WTC11 (cell line): ENCODE measurements at regions of chr6 and their contacts with region 1.

Region 1: GRCh38 chr6:32843979-32844838 is at the start of gene PSMB8:
- DNase-seq: peak; percentile 96
- ATAC-seq: peak; percentile 93
- H3K4me3 Mint-ChIP-seq: peak within 1 kb of the TSS; percentile 95
- H3K27ac Mint-ChIP-seq: peak within 1 kb of the TSS; percentile 78
- H3K4me1 Mint-ChIP-seq: peaks cover 17% of the 10 kb centered on the region
- H3K27me3 Mint-ChIP-seq: peaks cover 94% of the 10 kb centered on the region
- CTCF ChIP-seq: no peak
- total RNA-seq, gene PSMB8: 13.8 to 22.0 TPM (median 19.4 TPM) in 3 replicates

Region 2: DNA sequence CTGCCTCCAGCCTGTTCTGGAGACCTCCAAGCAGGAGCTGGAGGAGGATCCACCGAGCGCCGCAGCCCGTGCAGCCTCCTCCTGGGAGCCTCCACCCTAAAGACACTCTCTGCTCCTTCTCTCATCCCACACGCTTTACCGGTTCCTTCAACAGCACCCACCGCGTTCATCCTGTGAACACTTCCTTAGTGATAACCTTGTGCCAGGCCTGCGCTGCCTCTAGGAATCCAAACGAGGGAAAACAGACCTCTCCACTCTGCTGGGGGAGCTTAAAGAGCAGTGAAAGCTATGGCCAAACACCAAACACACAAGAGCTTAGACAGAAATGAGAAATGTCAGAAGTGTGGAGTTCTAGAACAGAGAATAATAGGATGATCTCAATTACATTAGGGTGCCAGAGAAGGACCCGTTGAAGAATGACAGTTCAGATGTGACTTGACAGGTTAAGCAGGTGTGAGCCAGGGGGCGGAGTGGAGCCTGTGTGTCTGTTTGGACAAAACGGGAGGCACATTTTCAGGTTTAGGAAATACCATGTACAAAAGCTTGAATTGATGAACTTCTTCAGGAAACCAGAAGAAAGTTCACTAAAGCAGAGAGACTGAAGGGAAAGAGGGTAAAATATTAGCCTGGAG is 285.7 kb before region 1 on chr6:
- CTCF ChIA-PET with region 1: no interaction called
- POLR2A ChIA-PET with region 1: no interaction called
- DNase-seq: no peak
- ATAC-seq: peak; percentile 65
- H3K4me3 Mint-ChIP-seq: peak overlapping the region; percentile 65
- H3K27ac Mint-ChIP-seq: no peak overlapping the region
- H3K4me1 Mint-ChIP-seq: peaks cover 5% of the 10 kb centered on the region; the same call in 1 of the 2 replicates
- H3K27me3 Mint-ChIP-seq: peaks cover 12% of the 10 kb centered on the region
- CTCF ChIP-seq: no peak

Region 3: GRCh38 chr6:32860674-32861073 is 16.5 kb after region 1 on chr6:
- CTCF ChIA-PET with region 1: interaction called, 291 read pairs
- POLR2A ChIA-PET with region 1: interaction called, 28 read pairs
- DNase-seq: no peak
- ATAC-seq: no peak
- H3K4me3 Mint-ChIP-seq: no peak overlapping the region
- H3K27ac Mint-ChIP-seq: peak overlapping the region; percentile 88
- H3K4me1 Mint-ChIP-seq: peaks cover 10% of the 10 kb centered on the region
- H3K27me3 Mint-ChIP-seq: peaks cover 37% of the 10 kb centered on the region
- CTCF ChIP-seq: no peak

Region 4: DNA sequence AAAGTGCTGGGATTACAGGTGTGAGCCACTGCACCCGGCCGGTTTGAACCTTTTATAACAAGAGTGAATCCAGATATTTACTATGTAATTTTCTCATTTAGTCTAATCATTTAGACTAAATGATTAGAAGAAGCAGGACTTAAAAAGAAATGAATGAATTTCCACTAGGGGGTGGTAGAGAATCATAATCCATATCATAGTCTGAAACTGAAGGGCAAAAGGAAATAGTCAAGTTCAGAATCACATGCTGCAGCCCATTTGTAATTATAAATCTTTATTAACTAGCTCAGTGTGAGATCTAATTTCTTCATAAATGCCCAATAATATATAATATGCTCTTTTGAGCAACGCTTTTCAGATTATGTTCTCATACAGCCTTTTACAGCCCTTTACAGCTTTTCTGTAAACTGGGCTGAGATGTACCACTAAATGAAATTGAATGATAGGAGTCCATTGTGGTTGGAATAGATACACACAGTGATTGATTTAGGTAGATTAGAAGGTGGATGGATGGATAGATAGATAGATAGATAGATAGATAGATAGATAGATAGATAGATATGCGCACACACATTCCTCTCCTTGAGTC is 41.6 kb after region 1 on chr6:
- CTCF ChIA-PET with region 1: no interaction called
- POLR2A ChIA-PET with region 1: no interaction called
- DNase-seq: no peak
- ATAC-seq: no peak
- H3K4me3 Mint-ChIP-seq: no peak overlapping the region
- H3K27ac Mint-ChIP-seq: no peak overlapping the region
- H3K4me1 Mint-ChIP-seq: no peaks in the 10 kb centered on the region
- H3K27me3 Mint-ChIP-seq: peaks cover 9% of the 10 kb centered on the region
- CTCF ChIP-seq: peak; percentile 14; the same call in 1 of the 2 replicates